Left cardiac atrium (tissue), 4 donors: ENCODE measurements at regions of chr21 and their contacts with region 1.

Region 1: GRCh38 chr21:28336314-28336713 is 656.4 kb downstream of the LTN1 start:
- DNase-seq: peak; percentile 24
- ATAC-seq: peak; percentile 36 to 42

Region 2: GRCh38 chr21:27700974-27701614 is 635.2 kb before region 1 on chr21:
- intact Hi-C with region 1: loop called in 1 of 2 experiments (anchors 2 kb)
- DNase-seq: peak; percentile 89
- ATAC-seq: peak; percentile 88 to 91

Region 3: GRCh38 chr21:27759091-27759659 is 577.1 kb before region 1 on chr21:
- intact Hi-C with region 1: loop called in 1 of 2 experiments (anchors 5 kb)
- DNase-seq: peak; percentile 22
- ATAC-seq: peak in 1 of 2 donors; percentile 57

Region 4: DNA sequence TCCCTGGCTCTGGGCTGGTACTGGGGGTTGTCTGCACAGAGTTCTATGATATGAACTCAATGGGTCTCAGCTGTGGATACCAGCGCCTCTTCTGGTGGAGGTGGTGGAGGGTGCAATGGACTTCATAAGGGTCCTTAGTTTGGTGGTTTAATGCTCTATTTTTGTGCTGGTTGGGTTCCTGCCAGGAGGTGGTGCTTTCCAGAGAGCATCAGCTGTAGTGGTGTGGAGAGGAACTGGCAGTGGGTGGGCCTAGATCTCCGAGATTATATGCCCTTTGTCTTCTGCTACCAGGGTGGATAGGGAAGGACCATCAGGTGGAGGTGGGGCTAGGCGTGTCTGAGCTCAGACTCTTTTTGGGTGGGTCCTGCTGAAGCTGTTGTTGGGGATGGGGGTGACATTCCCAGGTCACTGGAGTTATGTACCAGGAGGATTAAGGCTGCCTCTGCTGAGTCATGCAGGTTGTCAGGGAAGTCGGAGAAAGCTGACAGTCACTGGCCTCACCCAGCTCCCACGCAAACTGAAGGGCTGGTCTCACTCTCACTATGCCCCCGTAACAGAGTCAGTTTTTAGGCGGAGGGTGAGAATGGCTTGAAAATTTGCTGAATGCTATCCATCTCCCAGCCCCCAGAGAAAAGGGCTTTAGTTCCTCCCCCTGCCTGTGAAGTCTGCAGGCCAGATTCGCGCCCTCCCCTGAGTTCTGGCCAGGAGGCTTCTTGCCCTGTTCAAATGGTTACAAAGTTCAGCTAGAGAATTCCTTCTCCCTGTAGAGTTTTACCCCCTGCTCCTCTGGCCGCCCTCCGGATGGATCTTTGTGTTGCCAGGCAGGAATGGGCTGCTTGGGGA is 246.5 kb before region 1 on chr21:
- intact Hi-C with region 1: loop called in 1 of 2 experiments (anchors 10 kb)
- DNase-seq: no peak
- ATAC-seq: peak; percentile 59 to 85

Region 5: DNA sequence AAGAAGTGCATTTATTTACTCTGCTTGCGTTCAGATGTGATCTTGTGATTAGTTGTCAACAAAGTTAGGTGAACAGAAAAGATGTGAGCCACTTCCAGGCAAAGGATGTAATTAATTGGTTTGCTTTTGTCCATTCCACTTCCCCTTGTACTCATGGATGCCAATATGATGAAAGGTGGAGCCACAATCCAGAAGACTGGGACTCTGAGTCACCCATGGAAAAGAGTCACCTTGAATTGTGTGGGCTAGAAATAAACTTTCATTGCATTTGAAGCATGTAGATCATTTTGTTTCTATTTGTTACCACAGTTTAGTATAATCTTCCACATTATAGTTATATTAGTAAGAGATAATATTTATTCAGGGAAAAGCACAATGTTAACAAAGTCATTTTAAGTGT is 27.8 kb before region 1 on chr21:
- intact Hi-C with region 1: no loop called
- DNase-seq: no peak
- ATAC-seq: no peak